Activated CD8-positive, alpha-beta T cell treated with anti-CD3 and anti-CD28 coated beads, Interleukin-2, amount 10 ng/mL, durations not matched to agents 7 days and 5 days (primary cell): ENCODE measurements at regions of chr18 and their contacts with region 1.

Region 1: DNA sequence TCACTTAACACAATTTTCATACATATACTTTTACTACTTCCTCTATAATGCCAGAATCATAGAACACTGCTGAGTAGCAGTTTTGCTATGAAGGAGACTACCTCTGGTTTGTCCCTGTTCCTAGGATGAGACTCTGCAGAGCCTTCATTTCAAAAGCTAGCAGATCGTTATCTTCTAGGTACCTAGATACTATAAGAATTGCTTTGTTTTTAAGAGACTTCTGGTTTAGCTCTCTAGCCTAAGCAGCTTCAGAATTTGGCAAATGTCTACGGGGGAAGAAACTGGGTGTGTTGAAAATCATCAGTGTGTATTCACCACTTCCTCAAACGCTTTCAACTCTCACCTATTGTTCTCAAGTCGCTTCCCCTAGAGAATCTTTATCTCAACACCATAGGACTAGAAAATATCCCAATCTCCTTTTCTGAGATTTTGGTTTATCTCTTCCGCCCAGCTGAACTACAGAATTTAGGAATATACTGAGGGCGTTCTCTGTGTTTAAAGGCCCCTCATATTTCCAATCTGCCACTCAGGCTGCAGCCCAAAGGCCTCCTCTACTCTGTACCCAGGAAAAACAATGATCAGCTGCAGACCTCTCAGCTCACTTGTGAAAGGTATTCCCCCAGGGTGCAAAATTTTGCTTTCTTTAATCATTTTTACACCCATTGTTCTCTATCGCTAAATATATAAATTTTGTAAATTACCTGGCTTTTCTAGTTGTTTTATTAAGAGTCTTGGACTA is 28.7 kb downstream of the SMAD2 start:
- DNase-seq: peak; percentile 38
- ATAC-seq: peak; percentile 94
- H3K4me3 Mint-ChIP-seq: peak overlapping the region; percentile 58
- H3K27ac Mint-ChIP-seq: peak overlapping the region; percentile 82
- H3K4me1 Mint-ChIP-seq: peaks cover 40% of the 10 kb centered on the region
- H3K27me3 Mint-ChIP-seq: no peaks in the 10 kb centered on the region

Region 2: DNA sequence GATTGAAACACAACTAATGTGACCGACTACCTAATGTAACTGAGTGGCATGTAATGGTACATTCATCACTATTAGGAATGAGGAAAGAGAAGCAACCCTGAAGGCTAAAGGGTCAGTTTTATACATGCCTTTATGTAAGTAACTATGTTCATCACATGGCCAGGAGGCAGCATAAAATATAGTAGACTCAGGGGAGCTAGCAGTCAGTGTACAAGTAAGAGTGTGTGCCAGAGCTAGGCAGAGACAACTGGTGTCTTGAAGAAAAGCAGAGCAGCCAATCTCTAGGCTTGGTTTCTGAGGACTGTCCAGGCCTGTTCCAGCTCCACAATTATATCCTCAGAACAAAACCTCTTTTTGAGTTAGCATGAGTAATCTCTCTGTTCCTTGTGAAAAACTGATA is 10.6 kb after region 1 on chr18:
- CTCF ChIA-PET with region 1: interaction called, 14 read pairs
- POLR2A ChIA-PET with region 1: interaction called, 3 read pairs
- DNase-seq: no peak
- ATAC-seq: peak; percentile 59
- H3K4me3 Mint-ChIP-seq: no peak overlapping the region
- H3K27ac Mint-ChIP-seq: peak overlapping the region; percentile 61
- H3K4me1 Mint-ChIP-seq: peaks cover 52% of the 10 kb centered on the region
- H3K27me3 Mint-ChIP-seq: no peaks in the 10 kb centered on the region

Region 3: DNA sequence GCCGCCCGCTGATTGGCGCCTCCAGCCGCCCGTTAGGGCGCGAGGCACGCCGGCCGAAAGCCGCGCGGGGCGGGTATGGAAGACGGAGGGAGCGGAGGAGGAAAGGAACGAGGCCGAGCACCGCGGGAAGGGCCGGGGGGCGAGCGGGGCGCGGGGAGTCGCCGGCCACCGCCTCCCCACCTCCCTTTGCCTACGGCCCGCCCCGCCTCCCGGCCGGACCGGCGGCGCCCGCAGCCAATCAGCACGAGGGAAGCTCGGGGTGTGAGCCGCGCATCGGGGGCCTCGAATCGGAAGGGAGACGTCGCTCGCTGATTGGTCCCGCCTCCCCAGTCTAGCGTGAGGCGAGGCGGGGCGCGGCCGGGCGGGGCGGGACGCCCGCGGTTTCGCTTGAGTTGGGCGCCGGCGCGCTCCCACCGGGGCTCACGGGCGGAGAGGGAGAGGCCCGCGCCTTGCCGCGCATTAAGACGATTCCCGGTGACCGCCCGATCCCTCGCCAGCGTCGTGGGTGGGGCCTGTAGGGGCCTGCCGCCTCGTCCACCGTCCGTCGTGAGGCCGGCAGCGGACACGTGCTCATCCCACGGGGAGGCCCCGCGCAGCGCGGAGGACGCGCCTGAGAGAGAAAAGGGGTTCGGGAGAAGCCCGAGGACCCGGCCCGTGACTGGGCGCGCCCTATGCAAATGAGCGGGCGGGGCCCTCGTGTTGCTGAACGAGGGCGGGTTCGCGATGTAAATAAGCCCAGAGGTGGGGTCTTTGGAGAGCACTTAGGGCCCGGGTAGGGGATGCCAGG is 29.3 kb after region 1 on chr18:
- CTCF ChIA-PET with region 1: no interaction called
- POLR2A ChIA-PET with region 1: interaction called, 13 read pairs
- DNase-seq: peak; percentile 96
- ATAC-seq: peak; percentile 84
- H3K4me3 Mint-ChIP-seq: peak overlapping the region; percentile 73
- H3K27ac Mint-ChIP-seq: peak overlapping the region; percentile 86
- H3K4me1 Mint-ChIP-seq: peaks cover 43% of the 10 kb centered on the region
- H3K27me3 Mint-ChIP-seq: peaks cover 10% of the 10 kb centered on the region

Region 4: GRCh38 chr18:47964053-47964452 is 62.3 kb after region 1 on chr18:
- CTCF ChIA-PET with region 1: no interaction called
- POLR2A ChIA-PET with region 1: no interaction called
- DNase-seq: no peak
- ATAC-seq: no peak
- H3K4me3 Mint-ChIP-seq: no peak overlapping the region
- H3K27ac Mint-ChIP-seq: no peak overlapping the region
- H3K4me1 Mint-ChIP-seq: no peaks in the 10 kb centered on the region
- H3K27me3 Mint-ChIP-seq: peaks cover 11% of the 10 kb centered on the region